Left ventricle myocardium superior (tissue), 1 donor: ENCODE measurements at regions of chr16 and their contacts with region 1.

Region 1: DNA sequence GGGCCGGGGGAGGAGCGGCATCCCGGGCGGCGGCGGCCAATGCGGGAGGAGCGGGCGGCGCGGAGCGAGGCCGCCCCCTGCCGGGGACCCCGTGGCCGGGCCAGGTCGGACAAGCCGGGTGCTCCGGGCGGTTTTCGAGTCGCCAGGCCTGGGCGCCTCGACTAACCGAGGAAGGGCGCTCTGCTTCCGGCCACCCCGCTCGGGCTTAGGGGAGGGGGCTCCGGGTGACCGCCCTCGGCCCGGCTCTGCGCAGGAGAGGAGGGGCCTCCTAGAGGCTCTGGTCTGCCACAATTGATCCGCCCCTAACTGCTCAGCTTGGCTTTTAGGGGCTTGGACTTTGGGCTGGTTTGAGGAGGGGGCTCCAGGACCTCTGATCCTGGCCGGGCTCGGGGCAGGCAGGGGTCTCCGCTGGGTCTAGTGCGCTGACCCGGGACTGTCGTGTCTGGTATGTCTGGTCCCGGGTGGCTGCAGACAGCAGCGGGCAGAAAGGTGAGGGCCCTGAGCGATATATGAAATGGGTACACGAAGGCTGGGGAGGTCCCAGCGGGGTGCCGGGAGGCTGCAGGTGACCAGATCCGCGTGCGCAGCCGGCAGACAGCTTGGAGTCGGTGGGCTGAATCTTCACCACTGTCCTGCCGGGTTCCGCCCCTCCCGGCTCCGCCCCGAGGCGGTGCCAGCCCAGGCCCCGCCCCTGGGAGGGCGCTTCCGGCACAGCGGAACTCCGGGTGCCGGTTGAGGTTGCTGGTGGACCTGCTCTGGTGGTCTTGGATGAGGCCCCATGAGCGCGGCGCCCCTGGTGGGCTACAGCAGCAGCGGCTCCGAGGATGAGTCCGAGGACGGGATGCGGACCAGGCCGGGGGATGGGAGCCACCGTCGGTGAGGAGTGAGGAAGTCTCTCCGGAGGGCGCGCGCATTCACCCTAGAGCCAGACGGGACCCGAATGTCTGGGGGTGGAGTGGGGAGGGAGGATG is at the start of gene USB1:
- DNase-seq: peak; percentile 94
- ATAC-seq: peak; percentile 94
- total RNA-seq, gene USB1: 28.3 TPM

Region 2: GRCh38 chr16:57734925-57735754 is 265.9 kb before region 1 on chr16:
- intact Hi-C with region 1: loop called (anchors 10 kb)
- DNase-seq: peak; percentile 99
- ATAC-seq: peak; percentile 96

Region 3: GRCh38 chr16:57955572-57956188 is 45.3 kb before region 1 on chr16:
- intact Hi-C with region 1: no loop called
- DNase-seq: peak; percentile 51
- ATAC-seq: peak; percentile 74